OCI-LY7 (cell line): ENCODE measurements at regions of chr3 and their contacts with region 1.

Region 1: DNA sequence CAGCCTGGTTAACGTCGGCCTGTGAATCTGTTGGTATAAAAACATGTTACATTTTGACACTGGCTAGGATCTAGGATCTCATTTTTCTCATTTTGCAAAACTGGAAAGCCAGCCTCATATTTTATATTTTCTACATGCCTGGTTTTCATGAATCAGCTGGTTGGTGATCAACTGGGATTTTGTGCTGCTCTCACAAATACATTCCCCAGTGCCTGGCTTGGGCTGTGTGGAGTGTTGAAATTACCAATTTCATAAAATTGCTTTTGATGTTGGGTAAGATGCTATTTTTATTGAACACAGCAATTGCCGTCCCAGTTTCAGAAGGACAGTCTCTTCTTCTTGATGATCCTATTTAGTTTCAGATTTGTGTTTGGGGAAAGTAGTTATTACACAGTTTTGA is 604.3 kb downstream of the TAFA4 start:
- DNase-seq: no peak
- H3K4me3 ChIP-seq: no peak overlapping the region
- H3K27ac ChIP-seq: no peak overlapping the region
- H3K4me1 ChIP-seq: no peaks in the 10 kb centered on the region
- CTCF ChIP-seq: no peak

Region 2: DNA sequence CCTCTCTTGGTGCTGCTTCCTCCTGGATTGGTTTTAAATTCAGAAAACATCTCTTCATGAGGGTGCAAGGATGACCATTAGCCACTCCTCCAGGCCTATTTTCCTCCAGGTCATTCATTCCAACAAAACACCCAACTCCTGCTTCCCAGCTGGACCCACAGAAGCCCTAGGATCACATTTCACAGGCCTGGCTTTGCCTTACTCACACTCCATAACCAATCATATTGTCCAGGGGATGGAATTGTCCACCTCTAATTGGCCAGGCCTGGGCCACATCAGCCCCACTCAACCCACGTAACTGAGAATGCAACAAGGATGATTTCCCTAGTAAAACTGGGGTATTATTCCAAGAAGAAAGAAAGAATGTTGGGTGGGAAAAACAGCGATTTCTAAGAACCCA is 56.9 kb before region 1 on chr3:
- CTCF ChIA-PET with region 1: no interaction called
- POLR2A ChIA-PET with region 1: no interaction called
- intact Hi-C with region 1: loop called (anchors 1 kb)
- DNase-seq: no peak
- H3K4me3 ChIP-seq: no peak overlapping the region
- H3K27ac ChIP-seq: no peak overlapping the region
- H3K4me1 ChIP-seq: no peaks in the 10 kb centered on the region
- CTCF ChIP-seq: no peak

Region 3: GRCh38 chr3:68315546-68315945 is 12.5 kb before region 1 on chr3:
- CTCF ChIA-PET with region 1: no interaction called
- POLR2A ChIA-PET with region 1: no interaction called
- intact Hi-C with region 1: no loop called
- DNase-seq: no peak
- H3K4me3 ChIP-seq: no peak overlapping the region
- H3K27ac ChIP-seq: no peak overlapping the region
- H3K4me1 ChIP-seq: no peaks in the 10 kb centered on the region
- CTCF ChIP-seq: no peak